ENCODE measurements at regions of chr1 and their contacts with region 1.

Region 1: DNA sequence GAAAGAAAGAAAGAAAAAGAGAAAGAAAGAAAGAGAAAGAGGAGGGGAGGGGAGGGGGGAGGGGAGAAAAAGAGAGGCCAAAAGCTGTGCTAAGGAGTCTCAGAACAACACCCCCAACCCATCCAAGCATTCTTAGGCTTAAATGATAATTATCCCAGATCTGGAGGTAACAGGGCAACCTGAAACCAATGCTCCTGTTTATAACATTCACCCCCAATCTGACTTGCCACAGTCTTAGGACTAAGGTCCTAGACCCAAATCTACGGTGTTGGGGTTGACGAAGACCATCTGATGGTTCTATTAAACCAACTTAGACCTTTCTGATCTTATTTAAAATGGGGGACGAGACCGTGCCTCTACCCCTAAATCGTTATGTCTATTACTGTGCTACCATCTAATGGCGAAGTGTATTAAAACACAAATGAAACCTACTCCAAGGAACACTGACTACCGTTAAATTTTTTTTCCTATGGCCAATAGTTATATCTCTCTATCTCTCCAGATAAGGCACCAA is 119.3 kb upstream of the CDC42BPA start:
- ATAC-seq: peak; percentile 57 to 88 (median 78)
- H3K4me3 ChIP-seq: peak overlapping the region in 1 of 5 donors; percentile 17
- H3K27ac ChIP-seq: no peak overlapping the region
- H3K4me1 ChIP-seq: no peaks in the 10 kb centered on the region

Region 2: GRCh38 chr1:226634166-226634588 is 803.4 kb before region 1 on chr1:
- in situ Hi-C with region 1: loop called in 2 of 9 experiments (anchors 10 to 25 kb)
- ATAC-seq: peak; percentile 82 to 96 (median 92)
- H3K4me3 ChIP-seq: no peak overlapping the region
- H3K27ac ChIP-seq: no peak overlapping the region
- H3K4me1 ChIP-seq: peaks cover 0 to 7% of the 10 kb centered on the region in 2 donors

Region 3: GRCh38 chr1:227234998-227235405 is 202.6 kb before region 1 on chr1:
- in situ Hi-C with region 1: loop called in 3 of 9 experiments (anchors 25 kb)
- ATAC-seq: peak in 3 of 8 experiments; percentile 76 to 95 (median 79)
- H3K4me3 ChIP-seq: no peak overlapping the region
- H3K27ac ChIP-seq: no peak overlapping the region
- H3K4me1 ChIP-seq: no peaks in the 10 kb centered on the region

Region 4: DNA sequence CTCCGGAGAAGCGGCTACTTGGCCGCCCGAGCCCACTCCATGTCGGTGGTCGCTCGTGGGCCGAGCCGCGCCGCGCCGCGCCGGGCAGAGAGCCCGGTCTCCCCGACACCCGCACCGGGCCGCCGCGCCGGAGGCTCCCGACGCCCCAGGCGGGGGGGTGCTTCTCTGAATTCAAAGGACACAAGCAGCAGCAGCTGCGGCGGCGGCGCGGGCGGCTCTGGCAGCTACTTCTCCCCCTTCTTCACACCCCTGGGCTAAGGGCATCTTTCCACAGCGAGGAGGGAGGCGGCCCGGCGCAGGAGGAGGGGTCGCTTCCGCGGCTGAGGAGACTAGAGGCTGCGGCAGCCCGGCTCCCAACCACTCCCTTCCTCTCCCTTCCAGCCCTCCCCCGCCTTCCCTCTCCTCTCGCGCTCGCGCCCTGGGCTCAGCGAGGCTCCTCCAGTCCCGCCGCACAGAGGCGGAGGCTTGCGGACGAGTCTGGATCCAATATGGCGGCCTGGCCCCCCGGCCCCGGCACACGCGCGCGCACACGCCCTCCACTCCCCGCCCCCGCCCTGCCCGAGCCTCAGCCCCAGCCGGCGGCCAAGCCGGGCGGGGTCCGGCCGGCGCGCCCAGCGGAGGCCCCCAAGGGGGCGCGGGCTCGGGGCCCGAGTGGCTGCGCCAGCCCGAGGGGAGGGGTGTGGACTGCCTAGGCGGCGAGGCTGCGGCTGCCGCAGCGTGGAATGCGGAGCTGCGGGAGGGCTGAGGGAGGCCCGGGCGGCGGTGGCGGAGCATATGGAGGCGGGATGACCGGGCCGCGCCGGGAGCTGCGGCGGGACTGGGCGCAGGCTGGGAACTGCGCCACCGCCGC is 119.3 kb before region 1 on chr1 and contains the start of gene CDC42BPA:
- in situ Hi-C with region 1: loop called in 1 of 9 experiments (anchors 25 kb)
- ATAC-seq: peak; percentile 74 to 91 (median 88)
- H3K4me3 ChIP-seq: peak within 1 kb of the TSS; percentile 58 to 86 (median 65)
- H3K27ac ChIP-seq: peak within 1 kb of the TSS; percentile 90 to 98
- H3K4me1 ChIP-seq: peaks cover 15 to 18% of the 10 kb centered on the region in 2 donors
- total RNA-seq, gene CDC42BPA: 36.0 to 89.0 (median 67.4) TPM

Region 5: GRCh38 chr1:227343727-227344551 is 93.6 kb before region 1 on chr1:
- in situ Hi-C with region 1: loop called in 1 of 9 experiments (anchors 25 kb)
- ATAC-seq: peak in 7 of 8 experiments; percentile 50 to 93 (median 63)
- H3K4me3 ChIP-seq: no peak overlapping the region
- H3K27ac ChIP-seq: no peak overlapping the region
- H3K4me1 ChIP-seq: no peaks in the 10 kb centered on the region